Natural killer cell (primary cell): ENCODE measurements at regions of chr7 and their contacts with region 1.

Region 1: GRCh38 chr7:44082541-44083207 is 344 bp upstream of the POLM start:
- DNase-seq: peak; percentile 95 to 99
- ATAC-seq: peak; percentile 92 to 98 (median 93)
- H3K4me3 ChIP-seq: peak overlapping the region; percentile 93
- H3K4me3 Mint-ChIP-seq: peak overlapping the region; percentile 94
- H3K27ac ChIP-seq: peak overlapping the region; percentile 80
- H3K27ac Mint-ChIP-seq: peak overlapping the region; percentile 93
- H3K4me1 ChIP-seq: peaks cover 39% of the 10 kb centered on the region
- H3K4me1 Mint-ChIP-seq: peaks cover 28 to 33% of the 10 kb centered on the region in 2 donors
- H3K27me3 ChIP-seq: no peaks in the 10 kb centered on the region
- H3K27me3 Mint-ChIP-seq: no peaks in the 10 kb centered on the region
- CTCF ChIP-seq: no peak

Region 2: DNA sequence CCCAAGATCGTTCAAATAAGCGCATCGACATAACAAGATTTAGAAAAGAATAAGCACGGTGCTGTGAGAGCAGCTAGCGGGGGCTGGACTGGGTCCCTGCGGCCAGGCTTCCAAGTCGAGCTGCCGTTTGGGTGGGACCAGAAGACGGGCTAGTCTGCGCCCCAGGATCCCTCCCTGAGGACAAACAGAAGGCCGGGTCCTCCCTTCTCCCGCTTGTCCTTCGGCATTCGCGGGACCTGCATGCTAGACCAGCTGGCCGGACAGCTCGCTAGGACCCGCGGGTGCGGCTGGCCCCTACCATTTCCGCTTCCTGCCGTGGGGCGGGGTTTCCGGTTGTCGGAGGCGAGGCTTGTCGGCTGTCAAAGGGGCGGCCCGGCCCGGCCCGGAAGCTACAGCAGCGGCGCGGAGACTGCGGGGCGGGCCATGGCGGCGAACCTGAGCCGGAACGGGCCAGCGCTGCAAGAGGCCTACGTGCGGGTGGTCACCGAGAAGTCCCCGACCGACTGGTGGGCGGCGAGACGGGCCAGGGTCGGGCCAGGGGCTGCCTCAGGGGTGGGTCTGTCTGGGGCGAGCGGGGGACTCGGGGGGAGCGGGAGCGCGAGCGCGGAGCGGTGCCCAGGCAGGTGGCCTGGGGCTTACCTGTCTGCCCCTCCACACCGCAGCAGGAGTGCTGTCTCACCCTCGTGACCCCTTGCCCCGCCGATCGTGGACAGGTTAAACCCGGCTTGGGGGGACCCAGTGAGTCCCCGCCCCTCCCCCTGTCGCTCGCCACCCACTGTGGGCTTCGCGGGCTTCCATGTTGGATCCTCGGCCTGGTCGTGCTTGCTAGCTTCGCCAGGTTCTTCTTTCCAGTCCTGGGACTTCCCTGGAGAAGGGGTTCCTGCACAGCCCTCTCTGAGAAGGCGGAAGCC is 38.1 kb before region 1 on chr7 and contains the start of gene DBNL:
- intact Hi-C with region 1: loop called (anchors 5 kb)
- DNase-seq: peak; percentile 91 to 92
- ATAC-seq: peak; percentile 72 to 83 (median 81)
- H3K4me3 ChIP-seq: peak within 1 kb of the TSS; percentile 70
- H3K4me3 Mint-ChIP-seq: peak within 1 kb of the TSS; percentile 92
- H3K27ac ChIP-seq: peak within 1 kb of the TSS; percentile 79
- H3K27ac Mint-ChIP-seq: peak within 1 kb of the TSS; percentile 87 to 94
- H3K4me1 ChIP-seq: peaks cover 59% of the 10 kb centered on the region
- H3K4me1 Mint-ChIP-seq: peaks cover 36 to 59% of the 10 kb centered on the region in 2 donors
- H3K27me3 ChIP-seq: no peaks in the 10 kb centered on the region
- H3K27me3 Mint-ChIP-seq: no peaks in the 10 kb centered on the region
- CTCF ChIP-seq: no peak
- total RNA-seq, gene DBNL: 123 to 129 (median 129) TPM

Region 3: GRCh38 chr7:44123190-44124003 is 40.7 kb after region 1 on chr7 and contains the start of gene POLD2:
- intact Hi-C with region 1: loop called (anchors 1 kb)
- DNase-seq: peak; percentile 95 to 97
- ATAC-seq: peak; percentile 97 to 99 (median 98)
- H3K4me3 ChIP-seq: peak within 1 kb of the TSS; percentile 58
- H3K4me3 Mint-ChIP-seq: peak within 1 kb of the TSS; percentile 93
- H3K27ac ChIP-seq: peak within 1 kb of the TSS; percentile 54
- H3K27ac Mint-ChIP-seq: peak within 1 kb of the TSS; percentile 76 to 84
- H3K4me1 ChIP-seq: peaks cover 15% of the 10 kb centered on the region
- H3K4me1 Mint-ChIP-seq: peaks cover 17 to 32% of the 10 kb centered on the region in 2 donors
- H3K27me3 ChIP-seq: no peaks in the 10 kb centered on the region
- H3K27me3 Mint-ChIP-seq: peaks cover 0 to 6% of the 10 kb centered on the region in 2 donors
- CTCF ChIP-seq: no peak
- total RNA-seq, gene POLD2: 30.1 to 38.3 (median 38.1) TPM

Region 4: DNA sequence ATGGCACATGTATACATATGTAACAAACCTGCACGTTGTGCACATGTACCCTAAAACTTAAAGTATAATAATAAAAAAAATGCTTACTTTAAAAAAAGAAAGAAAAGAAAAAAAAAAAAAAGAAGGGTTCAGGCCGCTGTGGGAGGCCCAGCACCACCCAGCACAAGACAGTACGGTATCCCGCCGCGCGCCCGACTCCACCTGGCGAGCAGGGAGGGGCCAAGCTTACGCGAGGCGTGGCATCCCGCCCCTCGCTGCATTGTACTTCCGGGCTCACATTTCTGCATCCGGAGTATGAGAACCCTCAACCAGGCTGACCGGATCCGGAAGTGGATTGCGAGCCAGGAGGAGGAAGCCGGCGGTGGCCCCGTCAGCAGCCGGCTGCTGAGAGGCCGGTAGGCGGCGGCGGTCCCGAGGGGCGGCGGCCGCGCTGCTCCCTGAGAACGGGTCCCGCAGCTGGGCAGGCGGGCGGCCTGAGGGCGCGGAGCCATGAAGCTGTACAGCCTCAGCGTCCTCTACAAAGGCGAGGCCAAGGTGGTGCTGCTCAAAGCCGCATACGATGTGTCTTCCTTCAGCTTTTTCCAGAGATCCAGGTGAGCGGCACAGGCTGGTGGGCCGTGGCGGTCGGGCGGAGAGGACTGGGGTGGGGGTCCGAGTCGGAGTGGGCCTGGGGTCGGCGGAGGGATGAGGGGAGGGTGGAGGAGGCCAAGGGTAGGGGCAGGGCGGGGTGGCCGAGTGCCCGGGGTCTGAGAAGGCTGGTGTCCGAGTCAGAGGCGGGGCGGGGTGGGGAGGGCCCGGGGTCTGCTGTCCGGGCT is 118.2 kb after region 1 on chr7 and contains the start of gene YKT6:
- intact Hi-C with region 1: loop called (anchors 5 kb)
- DNase-seq: peak; percentile 79 to 98
- ATAC-seq: peak; percentile 98 to 99 (median 99)
- H3K4me3 ChIP-seq: peak within 1 kb of the TSS; percentile 86
- H3K4me3 Mint-ChIP-seq: peak within 1 kb of the TSS; percentile 89
- H3K27ac ChIP-seq: peak within 1 kb of the TSS; percentile 74
- H3K27ac Mint-ChIP-seq: peak within 1 kb of the TSS; percentile 51 to 70
- H3K4me1 ChIP-seq: peaks cover 8% of the 10 kb centered on the region
- H3K4me1 Mint-ChIP-seq: peaks cover 24 to 26% of the 10 kb centered on the region in 2 donors
- H3K27me3 ChIP-seq: no peaks in the 10 kb centered on the region
- H3K27me3 Mint-ChIP-seq: peaks cover 7 to 9% of the 10 kb centered on the region in 2 donors
- CTCF ChIP-seq: peak; percentile 38
- total RNA-seq, gene YKT6: 72.4 to 107 (median 87.1) TPM

Region 5: DNA sequence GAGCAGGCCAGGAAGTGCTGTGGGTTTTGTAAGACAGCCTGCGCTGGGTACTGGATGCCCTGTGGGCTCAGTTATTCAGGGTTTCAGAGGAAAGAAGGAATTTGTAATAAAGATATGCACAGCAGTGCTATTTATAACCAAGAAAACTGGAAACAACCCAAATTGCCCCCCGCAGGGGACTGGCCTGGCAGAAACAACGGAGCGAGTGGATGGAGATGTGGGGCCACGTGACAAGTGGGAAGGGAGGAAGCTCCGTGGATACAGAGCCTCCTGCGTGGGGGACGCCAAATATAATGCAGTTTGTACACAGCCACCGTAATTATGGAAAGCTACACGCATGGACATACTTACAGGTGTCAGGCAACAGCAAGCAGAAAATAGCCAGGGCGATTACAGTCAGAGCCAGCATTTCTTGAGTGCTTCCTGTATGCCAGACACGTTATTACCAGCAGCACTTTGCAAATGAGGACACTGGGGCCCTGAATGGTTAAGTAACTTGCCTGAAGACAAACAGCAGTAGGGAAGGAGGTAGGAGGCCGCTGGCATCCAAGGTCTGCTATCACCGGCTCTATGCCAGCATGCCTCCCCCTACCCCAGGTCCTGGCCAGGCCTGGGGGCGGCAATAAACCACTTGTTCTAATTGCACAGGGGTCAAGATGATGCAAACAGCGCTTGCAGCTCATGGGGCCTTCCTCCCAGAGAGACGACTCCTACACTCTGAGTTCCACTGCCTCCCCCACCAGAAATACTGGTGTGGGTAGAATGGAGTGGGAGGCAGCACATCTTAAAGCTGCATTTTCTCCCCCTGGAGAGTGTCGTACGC is 251.4 kb after region 1 on chr7:
- intact Hi-C with region 1: no loop called
- DNase-seq: no peak
- ATAC-seq: no peak
- H3K4me3 ChIP-seq: no peak overlapping the region
- H3K4me3 Mint-ChIP-seq: no peak overlapping the region
- H3K27ac ChIP-seq: no peak overlapping the region
- H3K27ac Mint-ChIP-seq: no peak overlapping the region
- H3K4me1 ChIP-seq: no peaks in the 10 kb centered on the region
- H3K4me1 Mint-ChIP-seq: no peaks in the 10 kb centered on the region
- H3K27me3 ChIP-seq: peaks cover 2% of the 10 kb centered on the region
- H3K27me3 Mint-ChIP-seq: peaks cover 22 to 30% of the 10 kb centered on the region in 2 donors
- CTCF ChIP-seq: no peak

Region 6: GRCh38 chr7:44398511-44398911 is 315.8 kb after region 1 on chr7:
- intact Hi-C with region 1: no loop called
- DNase-seq: no peak
- ATAC-seq: no peak
- H3K4me3 ChIP-seq: no peak overlapping the region
- H3K4me3 Mint-ChIP-seq: no peak overlapping the region
- H3K27ac ChIP-seq: no peak overlapping the region
- H3K27ac Mint-ChIP-seq: peak overlapping the region in 1 of 2 donors; percentile 15
- H3K4me1 ChIP-seq: no peaks in the 10 kb centered on the region
- H3K4me1 Mint-ChIP-seq: peaks cover 20 to 32% of the 10 kb centered on the region in 2 donors
- H3K27me3 ChIP-seq: no peaks in the 10 kb centered on the region
- H3K27me3 Mint-ChIP-seq: no peaks in the 10 kb centered on the region
- CTCF ChIP-seq: no peak

Region 7: DNA sequence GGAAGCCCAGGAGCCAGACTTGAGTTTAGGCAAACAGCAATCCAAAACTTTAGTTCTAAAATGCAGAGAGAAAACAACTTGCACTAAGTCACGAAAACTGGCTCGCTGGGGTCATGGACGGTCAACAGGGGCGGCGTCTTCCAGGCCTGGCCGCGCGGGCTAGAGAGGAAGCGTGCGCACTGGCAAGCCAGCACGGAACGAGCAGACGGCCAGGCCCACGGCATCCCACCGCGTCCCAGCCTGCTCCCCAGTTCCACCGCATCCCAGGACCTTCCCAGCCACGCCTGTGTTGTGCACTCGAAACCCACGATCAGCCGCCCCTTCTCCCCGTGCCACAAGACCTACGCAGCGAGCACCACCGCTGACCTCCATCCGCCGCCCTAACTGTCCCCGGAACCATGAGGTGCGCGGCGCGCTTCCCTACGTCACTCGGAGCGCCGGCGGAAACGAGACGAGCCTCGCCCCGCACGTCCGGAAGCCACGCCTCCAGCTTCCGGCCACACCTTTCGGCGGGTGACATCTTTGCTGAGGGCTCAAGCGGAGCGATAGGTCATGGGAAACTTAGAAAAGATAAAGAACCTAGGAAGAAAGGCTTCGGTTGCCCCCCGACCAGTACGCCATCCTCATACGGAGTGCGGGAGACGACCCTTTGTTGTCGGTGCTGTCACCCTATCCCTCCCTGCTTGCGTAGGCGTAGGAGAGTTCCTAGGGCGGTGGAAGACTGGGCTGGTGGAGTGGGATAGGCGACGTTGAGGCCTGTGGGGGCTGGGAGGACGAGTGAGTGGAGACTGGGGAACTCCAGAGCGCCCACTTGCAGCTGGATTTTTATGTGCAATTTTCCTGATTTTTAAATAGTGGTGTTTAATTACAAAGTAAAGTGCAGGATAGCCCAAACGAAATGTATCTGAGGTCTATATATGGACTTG is 1028.9 kb after region 1 on chr7 and contains the start of gene TBRG4:
- intact Hi-C with region 1: loop called (anchors 5 kb)
- DNase-seq: peak; percentile 94 to 98
- ATAC-seq: peak; percentile 93 to 97 (median 96)
- H3K4me3 ChIP-seq: peak within 1 kb of the TSS; percentile 66
- H3K4me3 Mint-ChIP-seq: peak within 1 kb of the TSS; percentile 100
- H3K27ac ChIP-seq: peak within 1 kb of the TSS; percentile 90
- H3K27ac Mint-ChIP-seq: peak within 1 kb of the TSS; percentile 100
- H3K4me1 ChIP-seq: peaks cover 33% of the 10 kb centered on the region
- H3K4me1 Mint-ChIP-seq: peaks cover 23 to 37% of the 10 kb centered on the region in 2 donors
- H3K27me3 ChIP-seq: no peaks in the 10 kb centered on the region
- H3K27me3 Mint-ChIP-seq: peaks cover 2 to 10% of the 10 kb centered on the region in 2 donors
- CTCF ChIP-seq: no peak
- total RNA-seq, gene TBRG4: 48.6 to 56.7 (median 55.9) TPM